ENCODE measurements at regions of chr9 and their contacts with region 1.

Region 1: GRCh38 chr9:28899926-28900325 is 1326.6 kb upstream of the C9orf72 start:
- DNase-seq: no peak
- ATAC-seq: no peak
- H3K4me3 ChIP-seq: no peak overlapping the region
- H3K27ac ChIP-seq: no peak overlapping the region
- H3K4me1 ChIP-seq: no peaks in the 10 kb centered on the region
- H3K27me3 ChIP-seq: no peaks in the 10 kb centered on the region
- CTCF ChIP-seq: no peak
- POLR2A ChIP-seq: no peak

Region 2: GRCh38 chr9:28967226-28967625 is 67.3 kb after region 1 on chr9:
- intact Hi-C with region 1: loop called in 1 of 10 experiments (anchors 10 kb)
- DNase-seq: no peak
- ATAC-seq: no peak
- H3K4me3 ChIP-seq: no peak overlapping the region
- H3K27ac ChIP-seq: no peak overlapping the region
- H3K4me1 ChIP-seq: no peaks in the 10 kb centered on the region
- H3K27me3 ChIP-seq: no peaks in the 10 kb centered on the region
- CTCF ChIP-seq: no peak
- POLR2A ChIP-seq: no peak

Measured in heart left ventricle (tissue), 16 donors.